ENCODE measurements at regions of chr21 and their contacts with region 1.

Region 1: GRCh38 chr21:38269576-38269936 is 12.8 kb downstream of the KCNJ15 start:
- DNase-seq: no peak
- H3K4me3 Mint-ChIP-seq: no peak overlapping the region
- H3K27ac Mint-ChIP-seq: peak overlapping the region; percentile 88
- H3K4me1 Mint-ChIP-seq: peaks cover 42% of the 10 kb centered on the region
- H3K27me3 Mint-ChIP-seq: peaks cover 2% of the 10 kb centered on the region

Region 2: DNA sequence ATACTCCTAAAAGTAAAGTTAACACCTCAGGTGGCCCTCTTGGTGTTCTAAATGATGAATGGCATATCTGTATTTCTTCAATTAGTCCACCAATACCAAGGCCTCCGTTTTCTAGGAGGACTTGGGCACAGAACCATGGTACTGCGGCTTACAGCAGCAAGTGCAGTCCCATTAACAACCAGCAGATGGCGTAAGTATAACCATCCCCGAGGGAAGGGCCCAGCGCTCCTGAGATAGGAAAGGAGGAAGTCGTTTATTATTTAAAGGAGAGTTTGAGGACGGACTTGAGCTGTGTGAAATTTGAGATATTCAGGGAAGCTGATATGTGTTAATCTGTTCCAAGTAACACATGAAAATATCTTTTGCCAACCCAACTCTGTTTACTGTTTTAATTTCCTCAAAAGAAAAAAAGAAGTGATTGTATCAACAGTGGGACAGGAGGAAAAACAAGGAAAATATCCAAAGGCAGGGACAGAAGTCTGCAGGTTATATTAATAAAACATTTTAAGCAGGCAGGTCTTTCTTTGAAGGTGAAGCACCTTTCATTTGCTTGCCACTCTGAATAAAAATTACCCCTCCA is 50.4 kb before region 1 on chr21:
- intact Hi-C with region 1: loop called (anchors 2 kb)
- DNase-seq: peak; percentile 31
- H3K4me3 Mint-ChIP-seq: no peak overlapping the region
- H3K27ac Mint-ChIP-seq: peak overlapping the region; percentile 45
- H3K4me1 Mint-ChIP-seq: peaks cover 8% of the 10 kb centered on the region
- H3K27me3 Mint-ChIP-seq: peaks cover 2% of the 10 kb centered on the region

Region 3: GRCh38 chr21:38229260-38229868 is 40.2 kb before region 1 on chr21:
- intact Hi-C with region 1: no loop called
- DNase-seq: no peak
- H3K4me3 Mint-ChIP-seq: no peak overlapping the region
- H3K27ac Mint-ChIP-seq: no peak overlapping the region
- H3K4me1 Mint-ChIP-seq: no peaks in the 10 kb centered on the region
- H3K27me3 Mint-ChIP-seq: no peaks in the 10 kb centered on the region

Region 4: GRCh38 chr21:38244885-38245545 is 24.5 kb before region 1 on chr21:
- intact Hi-C with region 1: loop called (anchors 1 kb)
- DNase-seq: peak; percentile 53
- H3K4me3 Mint-ChIP-seq: peak overlapping the region; percentile 30
- H3K27ac Mint-ChIP-seq: peak overlapping the region; percentile 74
- H3K4me1 Mint-ChIP-seq: peaks cover 39% of the 10 kb centered on the region
- H3K27me3 Mint-ChIP-seq: peaks cover 5% of the 10 kb centered on the region

Region 5: DNA sequence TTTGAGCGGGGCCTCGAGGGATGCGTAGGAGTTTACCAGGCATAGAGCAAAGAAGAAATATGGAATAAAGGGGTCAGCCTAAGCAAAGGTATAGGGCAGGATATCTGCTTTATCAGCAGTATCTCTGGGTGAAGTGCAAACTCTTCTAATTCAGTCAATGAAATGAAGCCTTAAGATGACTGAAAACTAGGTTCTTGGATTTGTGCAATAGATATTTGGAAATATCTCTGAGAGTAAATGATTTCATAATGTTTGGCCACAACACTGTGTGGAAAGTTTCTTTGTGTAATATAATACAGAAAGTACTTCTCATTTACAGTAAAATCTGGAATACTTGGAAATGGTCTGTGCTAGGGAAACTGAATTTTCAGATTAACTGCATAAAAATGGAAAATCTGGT is 13.4 kb after region 1 on chr21:
- intact Hi-C with region 1: loop called (anchors 2 kb)
- DNase-seq: no peak
- H3K4me3 Mint-ChIP-seq: no peak overlapping the region
- H3K27ac Mint-ChIP-seq: no peak overlapping the region
- H3K4me1 Mint-ChIP-seq: no peaks in the 10 kb centered on the region
- H3K27me3 Mint-ChIP-seq: peaks cover 2% of the 10 kb centered on the region

Region 6: DNA sequence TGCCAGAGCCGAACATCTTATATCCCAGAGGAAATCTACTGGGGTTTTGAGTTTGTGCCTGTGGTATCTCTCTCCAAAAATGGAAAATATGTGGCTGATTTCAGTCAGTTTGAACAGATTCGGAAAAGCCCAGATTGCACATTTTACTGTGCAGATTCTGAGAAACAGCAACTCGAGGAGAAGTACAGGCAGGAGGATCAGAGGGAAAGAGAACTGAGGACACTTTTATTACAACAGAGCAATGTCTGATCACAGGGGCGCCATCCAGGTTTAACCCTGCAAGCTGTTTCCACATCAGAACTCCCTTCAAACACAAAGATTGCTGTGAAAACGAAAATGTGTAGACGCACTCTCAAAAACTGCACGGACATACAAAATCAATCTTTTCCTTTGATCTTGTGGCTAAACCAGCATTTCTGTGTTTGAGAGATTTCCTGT is 30.6 kb after region 1 on chr21:
- intact Hi-C with region 1: loop called (anchors 2 kb)
- DNase-seq: no peak
- H3K4me3 Mint-ChIP-seq: peak overlapping the region; percentile 23
- H3K27ac Mint-ChIP-seq: no peak overlapping the region
- H3K4me1 Mint-ChIP-seq: peaks cover 28% of the 10 kb centered on the region
- H3K27me3 Mint-ChIP-seq: no peaks in the 10 kb centered on the region

Region 7: GRCh38 chr21:38323721-38324531 is 54.4 kb after region 1 on chr21:
- intact Hi-C with region 1: loop called (anchors 1 kb)
- DNase-seq: no peak
- H3K4me3 Mint-ChIP-seq: no peak overlapping the region
- H3K27ac Mint-ChIP-seq: no peak overlapping the region
- H3K4me1 Mint-ChIP-seq: peaks cover 21% of the 10 kb centered on the region
- H3K27me3 Mint-ChIP-seq: no peaks in the 10 kb centered on the region

Region 8: GRCh38 chr21:38349111-38349746 is 79.7 kb after region 1 on chr21:
- intact Hi-C with region 1: loop called (anchors 1 kb)
- DNase-seq: no peak
- H3K4me3 Mint-ChIP-seq: no peak overlapping the region
- H3K27ac Mint-ChIP-seq: peak overlapping the region; percentile 91
- H3K4me1 Mint-ChIP-seq: peaks cover 37% of the 10 kb centered on the region
- H3K27me3 Mint-ChIP-seq: peaks cover 3% of the 10 kb centered on the region